PC-9 (cell line): ENCODE measurements at regions of chr18 and their contacts with region 1.

Region 1: DNA sequence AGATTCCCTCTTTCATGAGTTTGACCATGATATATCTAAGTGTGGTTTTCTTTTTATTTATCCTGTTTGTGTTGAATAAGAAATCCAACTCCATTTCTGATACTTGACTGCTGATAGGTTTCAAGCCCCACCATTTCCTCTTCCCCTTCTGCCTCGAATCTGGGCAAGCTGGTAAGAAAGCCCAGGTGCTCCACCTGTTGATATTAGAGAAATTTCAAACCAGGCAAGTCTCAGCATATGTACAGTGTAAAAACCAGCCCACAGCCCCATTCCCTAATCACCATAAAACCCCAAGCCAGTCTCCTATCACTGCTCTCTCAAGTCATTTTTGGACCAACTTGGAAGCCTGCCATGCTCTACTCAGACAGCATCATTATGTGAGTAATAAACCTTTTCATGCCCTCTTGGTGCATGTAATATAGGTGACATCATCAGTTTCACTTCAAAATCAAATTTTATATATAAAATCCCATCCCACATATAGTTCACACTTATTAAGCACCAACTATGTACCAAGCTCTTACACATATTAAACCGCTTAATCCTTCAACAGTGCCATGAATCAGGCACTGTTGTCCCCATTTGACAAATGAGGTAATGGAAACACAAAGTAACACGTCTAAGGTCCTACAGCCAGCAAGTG is 46.6 kb downstream of the SMAD2 start:
- DNase-seq: peak in 1 of 2 experiments; percentile 49
- H3K4me3 ChIP-seq: no peak overlapping the region
- H3K27ac ChIP-seq: peak overlapping the region; percentile 58
- H3K4me1 ChIP-seq: peaks cover 46% of the 10 kb centered on the region
- H3K27me3 ChIP-seq: no peaks in the 10 kb centered on the region
- CTCF ChIP-seq: no peak

Region 2: DNA sequence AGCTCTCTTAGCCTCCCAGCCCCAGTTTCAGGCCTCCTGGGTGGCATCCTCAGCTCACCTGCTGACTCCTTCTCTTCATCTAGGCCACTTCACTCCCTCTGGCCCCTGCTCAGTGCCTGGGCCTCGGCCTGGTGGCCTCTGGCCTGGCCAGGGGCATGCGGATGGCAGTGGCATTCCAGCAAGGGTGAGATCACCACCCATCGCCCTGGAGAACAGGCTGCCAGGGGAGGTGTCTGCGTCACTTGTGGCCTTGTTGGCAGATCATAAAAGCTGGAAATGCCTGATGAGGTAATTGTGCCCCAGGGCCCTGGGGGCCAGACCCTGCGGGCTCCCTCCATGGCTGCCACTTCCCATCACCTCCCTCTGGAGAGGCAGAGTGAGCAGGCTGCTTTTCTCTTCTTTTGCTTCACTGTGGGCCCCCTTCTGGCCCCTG is 119.1 kb after region 1 on chr18:
- CTCF ChIA-PET with region 1: no interaction called
- POLR2A ChIA-PET with region 1: interaction called, 3 read pairs
- intact Hi-C with region 1: loop called (anchors 5 kb)
- DNase-seq: peak; percentile 85 to 95
- H3K4me3 ChIP-seq: no peak overlapping the region
- H3K27ac ChIP-seq: peak overlapping the region; percentile 77
- H3K4me1 ChIP-seq: peaks cover 32% of the 10 kb centered on the region
- H3K27me3 ChIP-seq: no peaks in the 10 kb centered on the region
- CTCF ChIP-seq: no peak